Activated CD4-positive, alpha-beta memory T cell treated with anti-CD3 and anti-CD28 coated beads for 36 hours (primary cell): ENCODE measurements at regions of chr19 and their contacts with region 1.

Region 1: DNA sequence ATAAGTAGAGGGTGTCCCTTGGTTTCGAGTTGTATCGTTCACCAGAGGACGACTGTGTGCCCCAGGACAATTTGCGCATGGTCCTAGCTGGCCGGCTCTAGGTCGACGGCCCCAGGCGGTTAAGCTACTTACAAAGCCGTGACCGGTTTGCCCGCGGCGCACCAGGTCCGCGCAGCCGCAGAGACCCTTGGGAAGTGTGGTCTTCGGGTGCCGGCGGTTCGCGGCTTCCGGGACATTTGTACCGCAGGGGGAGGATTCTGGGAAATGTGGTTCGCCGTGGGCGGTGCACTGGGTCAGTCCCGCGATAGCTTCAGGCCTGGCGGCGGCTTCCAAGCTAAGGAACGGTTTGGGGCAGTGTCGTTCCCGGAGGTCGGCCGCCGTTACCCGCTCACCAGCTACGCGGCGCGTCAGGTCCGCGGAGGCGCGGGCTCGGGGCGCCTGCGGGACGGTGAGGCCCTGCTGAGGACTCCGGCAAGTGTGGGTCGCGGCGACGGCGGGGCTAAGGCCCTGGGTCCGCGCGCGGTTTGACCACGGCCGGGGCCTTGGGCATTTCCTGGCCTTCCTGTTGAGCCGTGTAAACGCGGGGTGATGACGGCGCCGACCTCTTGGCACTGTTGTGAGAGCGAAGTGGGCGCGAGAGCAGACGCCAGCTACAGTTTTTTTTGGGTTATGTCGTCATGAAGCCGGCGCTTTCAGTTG is at the start of gene ZNF302:
- DNase-seq: peak; percentile 98
- H3K4me3 Mint-ChIP-seq: peak within 1 kb of the TSS; percentile 84
- H3K27ac Mint-ChIP-seq: peak within 1 kb of the TSS; percentile 96
- H3K4me1 Mint-ChIP-seq: peaks cover 27% of the 10 kb centered on the region
- H3K27me3 Mint-ChIP-seq: no peaks in the 10 kb centered on the region
- total RNA-seq, gene ZNF302: 16.5 to 16.6 TPM

Region 2: DNA sequence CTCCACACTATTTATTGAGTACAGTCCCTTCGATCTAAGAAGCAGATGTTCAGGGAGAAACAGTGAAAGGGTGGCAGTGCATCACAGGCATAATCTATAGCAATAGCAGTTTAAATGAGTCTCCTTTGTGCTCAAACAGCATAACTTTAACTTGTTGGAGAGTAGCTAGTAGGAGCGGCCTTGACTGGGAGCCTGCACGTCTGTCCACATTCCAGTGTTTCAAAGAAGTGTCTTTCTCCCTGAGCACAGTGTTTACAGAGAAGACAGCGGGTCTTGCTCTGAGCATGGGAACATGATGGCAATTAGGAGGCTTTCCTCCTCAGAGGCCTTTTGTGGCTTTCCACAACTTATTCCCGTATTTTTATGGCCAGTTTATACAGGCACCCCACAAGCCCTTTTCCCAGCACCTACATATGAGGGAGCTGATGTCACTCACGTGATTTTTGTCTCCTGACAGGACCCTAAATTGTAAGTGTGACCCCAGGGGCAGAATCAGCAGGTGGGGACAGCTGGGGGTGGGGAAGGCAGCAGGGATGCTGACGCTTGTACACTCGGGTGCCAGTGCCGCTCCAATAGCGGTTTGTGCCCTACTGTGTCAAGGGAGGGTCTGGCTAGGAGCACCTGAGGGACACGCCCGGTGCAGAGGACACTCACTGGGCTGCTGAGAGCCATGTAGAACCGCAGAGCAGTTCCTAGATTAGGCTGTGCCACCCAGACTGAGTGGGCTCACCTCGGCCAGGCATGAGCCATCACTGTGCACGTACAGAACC is 82.0 kb before region 1 on chr19:
- CTCF ChIA-PET with region 1: no interaction called
- POLR2A ChIA-PET with region 1: no interaction called
- intact Hi-C with region 1: no loop called
- DNase-seq: no peak
- H3K4me3 Mint-ChIP-seq: no peak overlapping the region
- H3K27ac Mint-ChIP-seq: no peak overlapping the region
- H3K4me1 Mint-ChIP-seq: peaks cover 5% of the 10 kb centered on the region
- H3K27me3 Mint-ChIP-seq: no peaks in the 10 kb centered on the region

Region 3: GRCh38 chr19:34654796-34655195 is 22.7 kb before region 1 on chr19:
- CTCF ChIA-PET with region 1: no interaction called
- POLR2A ChIA-PET with region 1: no interaction called
- intact Hi-C with region 1: no loop called
- DNase-seq: no peak
- H3K4me3 Mint-ChIP-seq: no peak overlapping the region
- H3K27ac Mint-ChIP-seq: no peak overlapping the region
- H3K4me1 Mint-ChIP-seq: no peaks in the 10 kb centered on the region
- H3K27me3 Mint-ChIP-seq: peaks cover 4% of the 10 kb centered on the region

Region 4: GRCh38 chr19:34733826-34734600 is 56.5 kb after region 1 on chr19 and contains the start of gene ZNF181:
- CTCF ChIA-PET with region 1: no interaction called
- POLR2A ChIA-PET with region 1: interaction called, 13 read pairs
- intact Hi-C with region 1: loop called (anchors 1 kb)
- DNase-seq: peak; percentile 89
- H3K4me3 Mint-ChIP-seq: peak within 1 kb of the TSS; percentile 86
- H3K27ac Mint-ChIP-seq: peak within 1 kb of the TSS; percentile 97
- H3K4me1 Mint-ChIP-seq: peaks cover 19% of the 10 kb centered on the region
- H3K27me3 Mint-ChIP-seq: peaks cover 1% of the 10 kb centered on the region
- total RNA-seq, gene ZNF181: 4.2 to 4.6 TPM

Region 5: GRCh38 chr19:34772697-34773554 is 95.4 kb after region 1 on chr19 and contains the start of gene ZNF599:
- CTCF ChIA-PET with region 1: no interaction called
- POLR2A ChIA-PET with region 1: interaction called, 3 read pairs
- intact Hi-C with region 1: loop called (anchors 5 kb)
- DNase-seq: peak; percentile 93
- H3K4me3 Mint-ChIP-seq: peak within 1 kb of the TSS; percentile 89
- H3K27ac Mint-ChIP-seq: peak within 1 kb of the TSS; percentile 78
- H3K4me1 Mint-ChIP-seq: peaks cover 16% of the 10 kb centered on the region
- H3K27me3 Mint-ChIP-seq: no peaks in the 10 kb centered on the region
- total RNA-seq, gene ZNF599: 3.2 to 3.7 TPM